GM23248 (cell line): ENCODE measurements at regions of chr16 and their contacts with region 1.

Region 1: DNA sequence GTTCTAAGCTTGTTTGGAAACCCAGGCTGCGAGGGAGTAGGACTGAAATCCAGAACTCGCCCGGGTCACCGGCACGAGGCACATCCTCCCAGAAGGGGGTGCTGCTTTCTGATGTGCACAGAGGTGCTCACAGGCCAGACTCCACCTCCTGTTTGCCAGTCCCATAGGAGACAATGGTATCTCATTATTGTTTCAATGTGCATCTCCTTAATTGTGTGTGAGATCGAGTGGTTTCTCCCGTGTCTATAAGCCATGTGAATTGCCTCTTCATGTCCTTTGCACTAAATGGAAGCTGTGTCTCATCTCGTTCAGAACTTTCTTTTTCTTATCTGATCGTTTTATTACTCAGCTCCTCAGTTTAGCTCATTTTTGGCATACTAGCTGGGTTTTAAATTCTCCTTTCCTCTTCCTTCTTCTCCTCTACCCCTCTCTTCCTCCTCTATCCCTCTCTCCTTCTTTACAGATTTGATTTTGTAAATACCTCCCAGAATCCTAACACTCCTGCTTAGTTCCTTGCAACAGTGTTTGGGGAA is 32.1 kb upstream of the PRKCB start:
- DNase-seq: peak; percentile 53
- H3K4me3 ChIP-seq: no peak overlapping the region
- H3K27ac ChIP-seq: no peak overlapping the region
- H3K4me1 ChIP-seq: no peaks in the 10 kb centered on the region
- H3K27me3 ChIP-seq: no peaks in the 10 kb centered on the region

Region 2: DNA sequence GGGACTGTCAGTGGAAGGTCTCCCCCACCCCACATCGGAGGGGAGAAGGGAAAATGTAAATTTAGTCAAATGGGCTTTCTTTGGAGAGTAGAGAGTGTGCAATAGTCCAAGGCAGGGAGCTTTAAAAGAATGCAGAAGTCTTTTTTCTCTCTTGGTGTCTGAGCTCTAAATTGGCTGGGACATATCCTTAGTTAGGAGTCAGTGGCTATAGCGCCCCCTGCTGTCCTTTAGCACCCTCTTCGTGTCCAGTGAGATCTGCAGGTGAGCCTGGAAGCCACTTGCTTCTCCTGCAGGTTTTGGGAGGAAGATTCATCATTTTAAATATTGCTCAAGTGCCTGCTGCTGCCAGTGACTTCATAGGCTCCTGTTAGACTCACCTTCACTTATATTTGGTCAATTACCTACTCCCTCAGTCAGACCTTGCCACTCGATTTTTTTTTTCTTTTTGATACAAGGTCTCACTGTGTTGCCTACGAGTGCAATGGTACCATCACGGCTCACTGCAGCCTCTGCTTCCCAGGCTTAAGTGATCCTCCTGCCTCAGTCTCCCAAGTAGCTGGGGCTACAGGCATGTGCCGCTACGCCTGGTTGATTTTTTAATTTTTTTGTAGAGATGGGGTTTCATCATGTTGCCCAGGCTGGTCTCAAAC is 206.9 kb after region 1 on chr16:
- in situ Hi-C with region 1: loop called (anchors 10 kb)
- DNase-seq: peak; percentile 78
- H3K4me3 ChIP-seq: no peak overlapping the region
- H3K27ac ChIP-seq: no peak overlapping the region
- H3K4me1 ChIP-seq: no peaks in the 10 kb centered on the region
- H3K27me3 ChIP-seq: no peaks in the 10 kb centered on the region

Region 3: DNA sequence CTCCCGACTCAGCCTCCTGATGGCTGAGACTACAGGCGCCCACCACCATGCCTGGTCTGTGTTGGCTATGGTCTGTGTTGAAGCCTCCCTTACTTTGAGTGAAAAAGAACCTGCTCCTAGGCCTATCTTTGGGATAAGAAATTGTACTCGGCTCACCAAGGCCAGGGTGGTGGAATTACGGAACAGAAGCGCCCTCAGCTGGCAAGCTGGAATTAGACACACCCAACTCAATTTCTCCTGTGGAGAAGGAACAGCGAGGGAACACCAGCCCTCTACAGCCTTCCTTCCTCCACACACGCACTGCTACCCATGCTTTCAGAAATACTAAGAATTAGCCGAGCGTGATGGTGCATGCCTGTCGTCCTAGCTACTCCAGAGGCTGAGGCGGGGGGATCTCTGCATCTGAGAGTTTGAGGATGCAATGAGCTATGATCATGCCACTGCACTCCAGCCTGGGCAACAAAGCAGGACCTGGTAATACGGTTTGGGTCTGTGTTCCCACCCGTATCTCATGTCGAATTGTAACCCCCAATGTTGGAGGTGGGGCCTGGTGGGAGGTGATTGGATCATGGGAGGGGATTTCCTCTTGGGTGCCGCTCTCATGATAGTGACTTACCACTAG is 695.6 kb after region 1 on chr16:
- in situ Hi-C with region 1: loop called (anchors 25 kb)
- DNase-seq: peak; percentile 53
- H3K4me3 ChIP-seq: no peak overlapping the region
- H3K27ac ChIP-seq: no peak overlapping the region
- H3K4me1 ChIP-seq: no peaks in the 10 kb centered on the region
- H3K27me3 ChIP-seq: peaks cover 5% of the 10 kb centered on the region; the same call in 1 of the 2 replicates